ENCODE measurements at regions of chr5 and their contacts with region 1.

Region 1: GRCh38 chr5:177425801-177426565 is 493 bp upstream of the GRK6 start:
- DNase-seq: peak; percentile 99 to 100 (median 100)
- H3K4me3 ChIP-seq: peak overlapping the region; percentile 40 to 94 (median 72)
- H3K27ac ChIP-seq: peak overlapping the region; percentile 66 to 98 (median 92)
- H3K27me3 ChIP-seq: no peaks in the 10 kb centered on the region
- CTCF ChIP-seq: peak in 11 of 56 donors; percentile 9 to 32 (median 13)

Region 2: GRCh38 chr5:177403792-177404640 is 22.0 kb before region 1 on chr5:
- intact Hi-C with region 1: loop called in 1 of 2 experiments (anchors 2 kb)
- DNase-seq: peak in 9 of 10 donors; percentile 72 to 83 (median 76)
- H3K4me3 ChIP-seq: peak overlapping the region; percentile 46 to 78 (median 61)
- H3K27ac ChIP-seq: peak overlapping the region in 33 of 59 donors; percentile 10 to 80 (median 55)
- H3K27me3 ChIP-seq: peaks cover 0 to 61% (median 46%) of the 10 kb centered on the region in 45 donors
- CTCF ChIP-seq: peak; percentile 34 to 81 (median 66)

Region 3: DNA sequence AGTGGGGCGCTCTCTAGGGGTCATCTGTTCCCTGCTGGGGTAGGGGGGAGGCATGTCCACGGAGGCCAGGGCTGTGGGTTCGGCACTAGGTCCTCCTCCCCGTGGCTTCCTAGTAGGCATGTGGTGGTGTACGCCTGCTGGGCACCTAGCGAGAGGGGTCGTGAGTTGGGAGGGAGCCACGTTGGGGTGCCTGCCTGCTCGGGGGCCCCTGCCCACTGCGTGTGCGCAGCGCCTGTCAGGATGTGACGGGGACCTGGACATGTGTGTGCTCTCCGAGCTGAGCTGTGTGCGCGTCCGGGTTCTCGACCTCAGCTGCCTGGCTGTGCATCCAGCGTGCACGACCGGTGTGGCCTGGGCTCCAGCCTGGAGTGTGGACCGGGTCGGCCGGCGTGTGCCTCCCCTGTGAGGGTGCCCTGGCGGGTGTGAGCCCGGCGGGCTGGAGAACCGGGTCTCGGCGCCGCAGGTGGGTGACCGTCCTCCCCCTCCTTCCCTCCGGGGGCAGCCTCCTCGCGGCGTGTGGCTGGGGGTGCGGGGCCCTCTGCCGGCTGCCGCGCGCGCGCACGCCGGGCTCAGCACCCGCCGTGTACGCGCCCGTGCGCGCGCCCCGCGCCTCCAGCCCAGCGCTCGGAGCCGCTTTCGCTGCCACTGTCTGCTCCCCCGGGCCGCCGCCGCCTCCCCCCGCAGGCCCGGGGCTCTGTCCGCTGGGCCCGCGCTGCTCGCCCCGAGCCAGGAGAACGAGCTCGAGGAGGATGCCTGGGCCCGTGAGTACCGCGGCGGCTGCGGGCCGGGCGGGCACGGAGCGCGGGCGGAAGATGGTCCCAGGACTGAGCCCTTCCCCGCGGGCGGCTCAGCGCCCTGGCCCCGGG is 20.4 kb after region 1 on chr5 and contains the start of gene PRR7:
- intact Hi-C with region 1: loop called (anchors 1 to 2 kb)
- DNase-seq: peak; percentile 58 to 85 (median 74)
- H3K4me3 ChIP-seq: peak within 1 kb of the TSS; percentile 54 to 88 (median 75)
- H3K27ac ChIP-seq: peak within 1 kb of the TSS; percentile 29 to 97 (median 92)
- H3K27me3 ChIP-seq: no peaks in the 10 kb centered on the region
- CTCF ChIP-seq: peak in 32 of 56 donors; percentile 5 to 55 (median 26)
- total RNA-seq, gene PRR7: 8.4 to 26.6 (median 16.7) TPM

Measured in dorsolateral prefrontal cortex (tissue), 120 donors.